ENCODE measurements at regions of chr6 and their contacts with region 1.

Region 1: DNA sequence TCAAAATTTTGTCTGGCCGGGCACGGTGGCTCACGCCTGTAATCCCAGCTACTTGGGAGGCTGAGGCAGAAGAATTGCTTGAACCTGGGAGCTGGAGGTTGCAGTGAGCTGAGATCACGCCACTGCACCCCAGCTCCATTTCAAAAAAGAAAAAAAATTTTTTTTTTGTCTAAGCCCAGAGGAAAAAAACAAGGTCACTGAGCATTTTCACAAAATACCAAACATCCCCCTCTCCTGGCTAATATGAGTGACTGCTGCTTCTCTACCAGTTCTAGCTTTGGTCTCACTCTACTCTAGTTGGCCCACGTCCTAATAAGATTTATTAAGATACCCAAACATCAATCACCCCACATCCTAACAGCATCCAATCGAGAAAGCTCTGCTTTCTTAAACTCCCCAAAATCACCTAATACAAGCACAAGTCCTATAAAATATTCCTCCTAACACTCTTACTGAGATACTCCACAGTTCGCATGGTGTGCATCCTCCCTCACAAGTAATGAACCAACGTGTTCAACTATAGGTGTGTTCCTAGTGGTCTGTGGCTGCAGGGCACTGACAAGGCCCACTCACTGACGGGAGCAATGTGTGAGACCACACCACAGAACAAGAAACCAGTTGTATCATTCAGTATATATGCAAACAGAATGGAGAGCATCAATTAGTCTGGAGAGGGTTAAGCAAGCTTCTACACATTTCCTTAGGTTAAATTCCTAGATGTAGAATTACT is 64.2 kb downstream of the FKBP5 start:
- DNase-seq: peak; percentile 42
- H3K4me3 ChIP-seq: no peak overlapping the region
- H3K27ac ChIP-seq: no peak overlapping the region
- H3K4me1 ChIP-seq: no peaks in the 10 kb centered on the region
- H3K27me3 ChIP-seq: no peaks in the 10 kb centered on the region
- CTCF ChIP-seq: peak; percentile 23 to 41
- POLR2A ChIP-seq: no peak

Region 2: GRCh38 chr6:35327349-35328027 is 297.0 kb before region 1 on chr6:
- CTCF ChIA-PET with region 1: no interaction called
- POLR2A ChIA-PET with region 1: no interaction called
- dilution Hi-C with region 1: no loop called
- intact Hi-C with region 1: no loop called
- DNase-seq: peak; percentile 58
- H3K4me3 ChIP-seq: no peak overlapping the region
- H3K27ac ChIP-seq: no peak overlapping the region
- H3K4me1 ChIP-seq: no peaks in the 10 kb centered on the region
- H3K27me3 ChIP-seq: peaks cover 0 to 5% of the 10 kb centered on the region in 2 experiments
- CTCF ChIP-seq: peak; percentile 53 to 78
- POLR2A ChIP-seq: no peak

Region 3: DNA sequence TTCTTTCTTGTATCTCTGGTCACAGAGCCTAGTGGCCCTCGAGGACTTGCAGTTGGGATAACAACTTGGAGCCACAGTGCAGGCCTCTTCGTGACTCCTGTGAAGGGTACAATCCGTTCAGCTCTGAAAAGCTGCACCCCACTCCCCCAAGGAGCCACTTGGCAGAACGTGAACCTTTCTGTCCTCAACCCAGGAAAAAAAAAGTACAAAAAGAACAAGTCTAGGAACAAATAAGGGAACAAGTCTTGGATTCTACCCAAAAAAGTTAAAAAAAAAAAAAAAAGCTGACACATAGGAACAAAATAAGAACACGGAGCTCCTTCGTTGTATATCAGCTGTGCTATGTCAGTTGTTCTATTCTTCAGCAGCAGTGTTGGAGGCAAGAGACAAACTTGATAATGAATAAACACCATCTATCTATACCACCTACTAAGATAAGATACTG is 33.9 kb before region 1 on chr6:
- CTCF ChIA-PET with region 1: interaction called, 56 read pairs
- POLR2A ChIA-PET with region 1: no interaction called
- dilution Hi-C with region 1: no loop called
- intact Hi-C with region 1: no loop called
- DNase-seq: peak; percentile 38
- H3K4me3 ChIP-seq: no peak overlapping the region
- H3K27ac ChIP-seq: no peak overlapping the region
- H3K4me1 ChIP-seq: no peaks in the 10 kb centered on the region
- H3K27me3 ChIP-seq: no peaks in the 10 kb centered on the region
- CTCF ChIP-seq: no peak
- POLR2A ChIP-seq: no peak

Region 4: DNA sequence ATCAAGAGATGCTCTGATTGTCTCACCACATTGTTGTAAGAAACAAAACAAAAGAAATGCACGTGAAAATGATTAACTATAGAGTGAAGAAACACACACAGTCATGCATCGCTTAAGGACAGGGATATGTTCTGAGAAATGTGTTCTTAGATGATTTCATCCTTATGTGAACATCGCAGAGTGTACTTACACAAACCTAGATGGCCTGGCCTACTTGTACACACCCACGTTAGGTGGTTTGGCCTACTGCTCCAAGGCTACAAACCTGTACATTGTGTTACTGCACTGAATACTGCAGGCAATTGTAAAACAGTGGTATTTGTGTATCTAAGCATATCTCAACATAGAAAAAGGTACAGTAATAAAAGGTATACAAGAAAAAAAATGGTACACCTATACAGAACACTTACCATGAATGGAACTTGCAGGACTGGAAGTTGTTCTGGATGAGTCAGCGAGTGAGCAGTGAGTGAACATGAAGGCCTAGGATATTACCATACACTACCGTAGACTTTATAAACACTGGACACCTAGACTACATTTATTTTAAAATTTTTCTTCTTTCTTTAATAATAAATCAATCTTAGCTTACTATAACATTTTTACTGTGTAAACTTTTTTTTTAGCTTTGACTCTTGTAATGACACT is 15.6 kb after region 1 on chr6:
- CTCF ChIA-PET with region 1: interaction called, 26 read pairs
- POLR2A ChIA-PET with region 1: interaction called, 3 read pairs
- dilution Hi-C with region 1: no loop called
- intact Hi-C with region 1: no loop called
- DNase-seq: no peak
- H3K4me3 ChIP-seq: no peak overlapping the region
- H3K27ac ChIP-seq: no peak overlapping the region
- H3K4me1 ChIP-seq: no peaks in the 10 kb centered on the region
- H3K27me3 ChIP-seq: no peaks in the 10 kb centered on the region
- CTCF ChIP-seq: no peak
- POLR2A ChIP-seq: no peak

Region 5: GRCh38 chr6:35678021-35678654 is 53.6 kb after region 1 on chr6:
- CTCF ChIA-PET with region 1: interaction called, 15 read pairs
- POLR2A ChIA-PET with region 1: no interaction called
- dilution Hi-C with region 1: no loop called
- intact Hi-C with region 1: loop called (anchors 5 kb)
- DNase-seq: peak; percentile 79
- H3K4me3 ChIP-seq: peak overlapping the region in 1 of 3 experiments; percentile 15
- H3K27ac ChIP-seq: peak overlapping the region; percentile 84
- H3K4me1 ChIP-seq: peaks cover 19% of the 10 kb centered on the region
- H3K27me3 ChIP-seq: no peaks in the 10 kb centered on the region
- CTCF ChIP-seq: no peak
- POLR2A ChIP-seq: no peak